Mammary epithelial cell (primary cell): ENCODE measurements at regions of chr6 and their contacts with region 1.

Region 1: GRCh38 chr6:116969211-116969863 is 92.3 kb downstream of the RFX6 start:
- DNase-seq: peak; percentile 25
- H3K4me3 ChIP-seq: no peak overlapping the region
- H3K27ac ChIP-seq: no peak overlapping the region
- H3K4me1 ChIP-seq: no peaks in the 10 kb centered on the region
- H3K27me3 ChIP-seq: peaks cover 4% of the 10 kb centered on the region
- CTCF ChIP-seq: peak; percentile 75 to 80

Region 2: DNA sequence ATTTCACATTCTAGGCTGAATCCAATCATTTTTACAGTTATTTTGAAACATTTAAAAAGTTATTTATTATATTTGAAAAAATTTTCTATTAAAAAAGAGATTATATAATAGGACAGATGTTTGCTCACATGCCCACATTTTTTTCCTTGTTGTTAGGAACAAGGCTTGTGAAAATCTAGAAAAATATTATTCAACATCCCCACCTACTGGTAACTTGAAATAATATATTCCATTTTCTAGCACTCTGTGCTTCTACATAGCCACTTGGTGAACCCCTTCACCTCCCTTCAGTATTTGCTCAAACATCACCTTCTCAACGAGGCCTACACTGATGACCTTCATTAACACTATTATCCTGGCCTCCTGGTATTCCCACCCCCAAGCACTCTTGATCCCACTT is 122.1 kb before region 1 on chr6:
- CTCF ChIA-PET with region 1: no interaction called
- dilution Hi-C with region 1: no loop called
- in situ Hi-C with region 1: no loop called
- intact Hi-C with region 1: no loop called
- DNase-seq: peak; percentile 24
- H3K4me3 ChIP-seq: no peak overlapping the region
- H3K27ac ChIP-seq: no peak overlapping the region
- H3K4me1 ChIP-seq: no peaks in the 10 kb centered on the region
- H3K27me3 ChIP-seq: peaks cover 2% of the 10 kb centered on the region
- CTCF ChIP-seq: peak; percentile 6 to 31

Region 3: DNA sequence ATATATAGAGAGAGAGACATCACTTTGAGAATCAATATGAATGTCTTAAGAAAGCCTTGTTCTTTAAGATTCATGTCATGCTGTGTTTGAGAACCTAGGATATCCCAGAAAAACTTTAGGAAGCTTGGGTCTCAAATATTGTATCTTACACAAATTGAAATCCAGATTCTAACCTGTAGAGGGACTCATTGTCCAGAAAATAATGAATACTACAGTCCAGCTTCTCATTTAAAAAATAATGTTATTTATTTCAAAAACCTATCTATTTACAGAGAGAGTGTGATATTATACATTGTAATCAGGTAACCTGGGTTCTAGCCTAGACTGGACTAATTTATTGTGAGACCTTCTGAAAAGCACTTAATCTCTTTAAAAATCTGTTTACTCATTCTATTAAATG is 88.1 kb before region 1 on chr6:
- CTCF ChIA-PET with region 1: no interaction called
- dilution Hi-C with region 1: no loop called
- in situ Hi-C with region 1: no loop called
- intact Hi-C with region 1: loop called (anchors 1 kb)
- DNase-seq: no peak
- H3K4me3 ChIP-seq: no peak overlapping the region
- H3K27ac ChIP-seq: no peak overlapping the region
- H3K4me1 ChIP-seq: peaks cover 9% of the 10 kb centered on the region
- H3K27me3 ChIP-seq: peaks cover 23% of the 10 kb centered on the region
- CTCF ChIP-seq: peak in 1 of 2 donors; percentile 29

Region 4: GRCh38 chr6:117188627-117189201 is 219.4 kb after region 1 on chr6:
- CTCF ChIA-PET with region 1: no interaction called
- dilution Hi-C with region 1: no loop called
- in situ Hi-C with region 1: no loop called
- intact Hi-C with region 1: loop called (anchors 2 kb)
- DNase-seq: no peak
- H3K4me3 ChIP-seq: no peak overlapping the region
- H3K27ac ChIP-seq: no peak overlapping the region
- H3K4me1 ChIP-seq: no peaks in the 10 kb centered on the region
- H3K27me3 ChIP-seq: no peaks in the 10 kb centered on the region
- CTCF ChIP-seq: peak; percentile 70 to 72